ENCODE measurements at regions of chr6 and their contacts with region 1.

Region 1: DNA sequence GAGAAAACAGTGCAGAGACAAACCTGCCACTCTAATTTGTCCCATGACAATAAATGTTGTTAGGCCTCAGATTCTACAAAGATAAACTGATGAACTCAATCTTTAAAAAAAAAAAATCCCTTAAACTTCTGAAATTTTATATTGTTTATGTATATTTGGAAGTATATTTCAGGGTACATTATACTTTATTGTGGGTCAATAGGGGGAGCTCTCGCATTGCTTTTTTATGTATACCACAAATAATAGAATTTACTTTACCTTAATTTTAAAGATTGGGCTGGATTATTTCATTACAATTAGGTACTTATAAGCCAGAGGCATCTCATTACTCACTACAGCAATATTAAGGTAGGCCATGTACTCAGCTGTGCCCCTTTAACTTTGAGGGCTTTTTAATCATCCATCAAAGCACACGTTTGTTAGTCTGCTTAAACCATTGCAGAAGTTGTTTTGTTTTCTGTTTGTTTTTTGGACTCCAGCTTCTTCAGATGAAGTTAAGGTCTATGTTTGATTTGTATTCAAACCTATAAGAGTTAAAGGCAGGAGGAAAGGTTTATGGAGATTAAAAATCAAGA is 56.3 kb upstream of the EYA4 start:
- DNase-seq: peak; percentile 57
- ATAC-seq: 0 out of 2 replicates have a peak, but pooled peaks have one; percentile 20
- H3K4me3 ChIP-seq: no peak overlapping the region
- H3K27ac ChIP-seq: no peak overlapping the region
- H3K4me1 ChIP-seq: peaks cover 4% of the 10 kb centered on the region
- H3K27me3 ChIP-seq: no peaks in the 10 kb centered on the region
- CTCF ChIP-seq: peak; percentile 71

Region 2: DNA sequence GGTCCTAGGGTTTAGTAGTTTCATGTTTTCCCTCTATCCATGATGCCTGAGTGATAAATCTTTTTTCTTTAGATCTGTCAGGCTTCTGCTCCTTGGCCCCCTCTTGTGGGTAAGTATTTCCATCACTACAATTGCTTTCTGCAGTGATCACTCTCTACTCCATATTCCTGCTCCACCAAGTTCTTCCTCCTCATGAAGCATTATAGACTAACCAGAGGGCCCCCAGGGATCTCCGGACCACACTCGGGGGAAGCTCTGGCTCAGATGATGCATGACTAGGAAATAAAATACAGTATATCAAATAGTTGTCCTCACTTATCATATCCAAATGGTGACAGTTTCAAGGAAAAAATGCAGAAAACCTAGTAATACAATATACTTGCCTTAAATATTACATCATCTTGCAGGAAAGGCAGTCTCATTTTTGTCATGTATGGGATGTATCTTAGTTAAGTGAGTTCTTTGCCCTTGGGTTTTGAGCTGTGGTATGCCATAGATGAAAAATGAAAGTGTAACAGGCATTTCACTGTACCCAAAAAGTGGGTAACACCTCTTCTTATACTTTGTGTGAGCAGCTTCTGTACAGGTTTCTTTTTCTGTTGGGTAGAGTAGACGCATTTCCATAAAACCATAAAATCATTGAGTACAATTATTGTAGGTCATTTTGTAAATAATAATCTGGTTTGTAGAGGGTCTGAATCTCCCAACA is 144.6 kb before region 1 on chr6:
- CTCF ChIA-PET with region 1: no interaction called
- POLR2A ChIA-PET with region 1: no interaction called
- intact Hi-C with region 1: loop called (anchors 5 kb)
- DNase-seq: peak; percentile 55
- ATAC-seq: peak; percentile 53
- H3K4me3 ChIP-seq: no peak overlapping the region
- H3K27ac ChIP-seq: no peak overlapping the region
- H3K4me1 ChIP-seq: no peaks in the 10 kb centered on the region
- H3K27me3 ChIP-seq: no peaks in the 10 kb centered on the region
- CTCF ChIP-seq: peak; percentile 72

Region 3: DNA sequence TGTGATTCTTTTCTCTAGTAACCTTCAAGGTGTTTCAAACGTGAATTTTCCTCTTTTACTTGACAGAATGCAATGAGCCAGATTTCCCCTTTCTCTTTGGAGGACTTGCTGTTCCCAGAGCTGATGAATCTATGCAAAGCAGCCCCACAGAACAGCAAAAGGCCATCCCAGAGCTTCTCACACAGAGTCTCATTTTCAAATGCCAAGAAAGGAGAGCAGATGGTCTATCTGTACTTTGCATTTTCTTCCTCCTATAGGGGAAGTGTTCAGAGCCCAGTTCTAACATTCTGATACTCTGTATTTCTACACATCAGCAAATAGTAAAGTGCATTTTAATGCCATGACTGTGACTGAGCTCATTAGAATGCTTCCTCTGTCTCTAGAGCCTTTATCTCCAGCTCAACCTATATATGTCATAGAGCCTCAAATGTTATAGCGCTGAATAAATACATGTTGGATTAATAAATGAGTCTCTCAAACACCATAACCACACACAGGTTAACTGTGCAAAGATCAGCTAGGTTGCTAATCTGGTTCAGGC is 25.6 kb before region 1 on chr6:
- CTCF ChIA-PET with region 1: no interaction called
- POLR2A ChIA-PET with region 1: no interaction called
- intact Hi-C with region 1: no loop called
- DNase-seq: peak; percentile 43
- ATAC-seq: peak; percentile 54
- H3K4me3 ChIP-seq: no peak overlapping the region
- H3K27ac ChIP-seq: no peak overlapping the region
- H3K4me1 ChIP-seq: no peaks in the 10 kb centered on the region; the same call in 1 of the 2 replicates
- H3K27me3 ChIP-seq: no peaks in the 10 kb centered on the region
- CTCF ChIP-seq: no peak

Region 4: GRCh38 chr6:133241086-133241900 is 56.4 kb after region 1 on chr6 and contains the start of gene EYA4:
- CTCF ChIA-PET with region 1: no interaction called
- POLR2A ChIA-PET with region 1: interaction called, 3 read pairs
- intact Hi-C with region 1: loop called (anchors 5 kb)
- DNase-seq: peak; percentile 62
- ATAC-seq: peak; percentile 70
- H3K4me3 ChIP-seq: peak within 1 kb of the TSS; percentile 92
- H3K27ac ChIP-seq: peak within 1 kb of the TSS; percentile 62
- H3K4me1 ChIP-seq: peaks cover 47% of the 10 kb centered on the region
- H3K27me3 ChIP-seq: no peaks in the 10 kb centered on the region
- CTCF ChIP-seq: no peak
- total RNA-seq, gene EYA4: 10.0 and 11.6 TPM in 2 replicates

Region 5: GRCh38 chr6:133254552-133255228 is 69.8 kb after region 1 on chr6:
- CTCF ChIA-PET with region 1: no interaction called
- POLR2A ChIA-PET with region 1: no interaction called
- intact Hi-C with region 1: no loop called
- DNase-seq: peak; percentile 57
- ATAC-seq: peak; percentile 90
- H3K4me3 ChIP-seq: no peak overlapping the region
- H3K27ac ChIP-seq: peak overlapping the region; percentile 79
- H3K4me1 ChIP-seq: peaks cover 36% of the 10 kb centered on the region
- H3K27me3 ChIP-seq: no peaks in the 10 kb centered on the region
- CTCF ChIP-seq: no peak

Region 6: GRCh38 chr6:133410628-133411027 is 225.7 kb after region 1 on chr6:
- CTCF ChIA-PET with region 1: no interaction called
- POLR2A ChIA-PET with region 1: no interaction called
- intact Hi-C with region 1: no loop called
- DNase-seq: no peak
- ATAC-seq: no peak
- H3K4me3 ChIP-seq: no peak overlapping the region
- H3K27ac ChIP-seq: no peak overlapping the region
- H3K4me1 ChIP-seq: no peaks in the 10 kb centered on the region
- H3K27me3 ChIP-seq: no peaks in the 10 kb centered on the region
- CTCF ChIP-seq: no peak

Region 7: DNA sequence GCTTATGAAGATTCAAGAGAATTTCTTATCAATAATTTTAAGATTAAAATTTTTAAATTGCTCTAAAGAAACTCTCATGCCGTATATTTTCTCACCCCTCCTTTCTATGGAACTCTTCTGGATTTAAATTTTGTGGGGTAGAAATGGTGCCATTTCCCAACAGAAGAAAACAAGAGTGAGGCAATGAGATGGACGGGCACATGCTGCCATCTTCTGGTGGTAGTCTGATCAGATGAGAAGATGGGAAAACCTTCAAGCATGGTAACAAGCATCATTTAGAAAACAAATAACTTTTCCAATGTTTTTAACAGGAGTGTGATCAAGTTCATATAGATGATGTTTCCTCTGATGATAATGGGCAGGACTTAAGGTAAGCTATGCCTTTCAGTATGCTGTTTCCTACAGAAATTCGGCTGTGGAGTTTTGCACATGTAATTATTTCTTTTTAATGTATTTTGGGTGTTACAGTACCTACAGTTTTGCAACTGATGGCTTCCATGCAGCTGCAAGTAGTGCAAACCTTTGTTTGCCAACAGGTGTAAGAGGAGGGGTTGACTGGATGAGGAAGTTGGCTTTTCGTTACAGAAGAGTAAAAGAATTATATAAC is 327.6 kb after region 1 on chr6:
- CTCF ChIA-PET with region 1: no interaction called
- POLR2A ChIA-PET with region 1: no interaction called
- intact Hi-C with region 1: loop called (anchors 1 kb)
- DNase-seq: peak; percentile 70
- ATAC-seq: 0 out of 2 replicates have a peak, but pooled peaks have one; percentile 42
- H3K4me3 ChIP-seq: no peak overlapping the region
- H3K27ac ChIP-seq: no peak overlapping the region
- H3K4me1 ChIP-seq: no peaks in the 10 kb centered on the region
- H3K27me3 ChIP-seq: no peaks in the 10 kb centered on the region
- CTCF ChIP-seq: peak; percentile 74